Mammary epithelial cell (primary cell): ENCODE measurements at regions of chr7 and their contacts with region 1.

Region 1: GRCh38 chr7:50793115-50793946 is 10.6 kb upstream of the GRB10 start:
- DNase-seq: no peak
- H3K4me3 ChIP-seq: peak overlapping the region in 2 of 3 experiments; percentile 37 to 53
- H3K27ac ChIP-seq: no peak overlapping the region
- H3K4me1 ChIP-seq: no peaks in the 10 kb centered on the region
- H3K27me3 ChIP-seq: peaks cover 13% of the 10 kb centered on the region
- CTCF ChIP-seq: no peak

Region 2: GRCh38 chr7:50812841-50813475 is 19.6 kb after region 1 on chr7:
- CTCF ChIA-PET with region 1: no interaction called
- dilution Hi-C with region 1: no loop called
- in situ Hi-C with region 1: no loop called
- intact Hi-C with region 1: no loop called
- DNase-seq: peak; percentile 83
- H3K4me3 ChIP-seq: no peak overlapping the region
- H3K27ac ChIP-seq: no peak overlapping the region
- H3K4me1 ChIP-seq: peaks cover 16% of the 10 kb centered on the region
- H3K27me3 ChIP-seq: no peaks in the 10 kb centered on the region
- CTCF ChIP-seq: no peak

Region 3: DNA sequence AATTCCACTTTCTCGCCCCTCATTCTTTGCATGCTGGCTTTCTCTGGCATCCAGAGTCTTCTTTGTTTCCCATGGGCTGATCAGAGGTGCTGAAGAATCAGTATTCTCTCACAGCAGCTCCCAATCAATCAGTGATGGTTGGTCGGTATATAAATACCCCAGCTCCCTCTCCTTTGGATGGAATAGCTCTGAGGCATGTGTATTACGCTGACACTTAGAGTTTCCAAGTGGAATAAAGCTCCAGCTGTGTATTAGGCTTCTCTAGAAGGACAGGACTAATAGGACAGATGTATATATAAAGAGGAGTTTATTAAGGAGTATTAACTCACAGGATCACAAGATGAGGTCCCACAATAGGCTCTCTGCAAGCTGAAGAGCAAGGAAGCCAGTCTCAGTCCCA is 207.6 kb after region 1 on chr7:
- CTCF ChIA-PET with region 1: no interaction called
- dilution Hi-C with region 1: no loop called
- in situ Hi-C with region 1: no loop called
- intact Hi-C with region 1: loop called (anchors 2 kb)
- DNase-seq: no peak
- H3K4me3 ChIP-seq: no peak overlapping the region
- H3K27ac ChIP-seq: no peak overlapping the region
- H3K4me1 ChIP-seq: no peaks in the 10 kb centered on the region
- H3K27me3 ChIP-seq: peaks cover 2% of the 10 kb centered on the region
- CTCF ChIP-seq: peak in 1 of 2 donors; percentile 5

Region 4: GRCh38 chr7:51067757-51068156 is 274.4 kb after region 1 on chr7:
- CTCF ChIA-PET with region 1: no interaction called
- dilution Hi-C with region 1: no loop called
- in situ Hi-C with region 1: no loop called
- intact Hi-C with region 1: loop called (anchors 1 kb)
- DNase-seq: peak; percentile 42
- H3K4me3 ChIP-seq: no peak overlapping the region
- H3K27ac ChIP-seq: no peak overlapping the region
- H3K4me1 ChIP-seq: peaks cover 17% of the 10 kb centered on the region
- H3K27me3 ChIP-seq: peaks cover 1% of the 10 kb centered on the region
- CTCF ChIP-seq: peak; percentile 72 to 79